Breast epithelium (tissue), 4 donors: ENCODE measurements at regions of chr20 and their contacts with region 1.

Region 1: DNA sequence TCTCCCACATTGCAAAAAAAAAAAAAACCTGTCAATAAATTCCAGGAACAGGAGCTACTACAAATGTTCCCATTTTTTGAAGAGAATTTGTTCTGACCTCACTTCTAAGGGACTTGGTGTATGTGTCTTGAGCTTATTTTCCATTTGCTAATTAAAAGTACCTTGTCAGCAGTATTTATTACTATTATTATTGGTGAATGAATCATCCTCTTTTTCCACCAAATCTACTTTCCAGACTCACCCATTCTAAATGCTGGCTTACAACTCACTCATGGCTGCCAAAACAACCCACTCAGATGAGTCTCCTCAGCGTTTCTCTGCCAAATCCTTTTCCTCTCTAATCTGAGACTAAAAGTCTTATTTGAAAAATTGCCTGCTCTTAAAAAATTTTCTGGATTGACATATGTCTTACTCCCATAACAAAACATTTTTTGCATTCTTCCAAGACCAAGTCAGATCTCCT is 33.2 kb upstream of the TASP1 start:
- DNase-seq: peak in 1 of 2 donors; percentile 33
- H3K4me3 ChIP-seq: no peak overlapping the region
- H3K27ac ChIP-seq: peak overlapping the region in 1 of 2 donors; percentile 71
- H3K4me1 ChIP-seq: no peaks in the 10 kb centered on the region
- H3K27me3 ChIP-seq: no peaks in the 10 kb centered on the region
- CTCF ChIP-seq: no peak
- POLR2A ChIP-seq: no peak

Region 2: GRCh38 chr20:13085275-13085674 is 586.7 kb before region 1 on chr20:
- intact Hi-C with region 1: no loop called
- DNase-seq: no peak
- H3K4me3 ChIP-seq: no peak overlapping the region
- H3K27ac ChIP-seq: no peak overlapping the region
- H3K4me1 ChIP-seq: no peaks in the 10 kb centered on the region
- H3K27me3 ChIP-seq: no peaks in the 10 kb centered on the region
- CTCF ChIP-seq: no peak
- POLR2A ChIP-seq: no peak

Region 3: DNA sequence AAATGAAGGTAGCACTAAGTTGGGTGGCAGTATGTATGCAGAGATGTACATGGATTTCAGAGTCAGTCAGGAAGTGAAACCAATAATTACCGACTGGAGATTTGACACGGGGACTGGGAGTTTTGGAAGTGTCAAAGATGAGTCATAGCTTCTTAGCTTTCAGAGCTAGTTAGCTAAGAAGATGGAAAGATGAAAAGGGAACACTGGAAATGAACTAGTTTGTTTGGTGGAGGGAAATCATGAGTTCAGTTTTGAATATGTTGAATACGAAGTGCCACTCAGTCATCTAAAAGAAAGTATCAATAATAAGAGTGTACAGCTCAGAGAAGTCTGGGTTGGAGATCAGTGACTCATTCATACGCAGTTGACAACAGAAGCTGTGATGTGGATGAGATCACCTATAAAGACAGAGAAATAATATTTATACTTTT is 105.2 kb after region 1 on chr20:
- intact Hi-C with region 1: loop called (anchors 5 kb)
- DNase-seq: no peak
- H3K4me3 ChIP-seq: no peak overlapping the region
- H3K27ac ChIP-seq: no peak overlapping the region
- H3K4me1 ChIP-seq: no peaks in the 10 kb centered on the region
- H3K27me3 ChIP-seq: no peaks in the 10 kb centered on the region
- CTCF ChIP-seq: no peak
- POLR2A ChIP-seq: no peak